Activated B cell treated with CpG ODN at 0.5 μM for 24 hours (primary cell): ENCODE measurements at regions of chr18 and their contacts with region 1.

Region 1: GRCh38 chr18:55589625-55590291 is 1.8 kb upstream of the TCF4 start:
- DNase-seq: peak; percentile 84
- ATAC-seq: peak; percentile 86
- H3K4me3 Mint-ChIP-seq: peak overlapping the region; percentile 89
- H3K27ac Mint-ChIP-seq: peak overlapping the region; percentile 89
- H3K4me1 Mint-ChIP-seq: peaks cover 38% of the 10 kb centered on the region
- H3K27me3 Mint-ChIP-seq: peaks cover 4% of the 10 kb centered on the region
- CTCF ChIP-seq: no peak

Region 2: GRCh38 chr18:55343396-55344073 is 246.2 kb before region 1 on chr18:
- CTCF ChIA-PET with region 1: no interaction called
- POLR2A ChIA-PET with region 1: interaction called, 13 read pairs
- intact Hi-C with region 1: loop called (anchors 5 kb)
- DNase-seq: no peak
- ATAC-seq: peak; percentile 82
- H3K4me3 Mint-ChIP-seq: no peak overlapping the region
- H3K27ac Mint-ChIP-seq: no peak overlapping the region
- H3K4me1 Mint-ChIP-seq: peaks cover 18% of the 10 kb centered on the region
- H3K27me3 Mint-ChIP-seq: no peaks in the 10 kb centered on the region
- CTCF ChIP-seq: peak; percentile 34

Region 3: DNA sequence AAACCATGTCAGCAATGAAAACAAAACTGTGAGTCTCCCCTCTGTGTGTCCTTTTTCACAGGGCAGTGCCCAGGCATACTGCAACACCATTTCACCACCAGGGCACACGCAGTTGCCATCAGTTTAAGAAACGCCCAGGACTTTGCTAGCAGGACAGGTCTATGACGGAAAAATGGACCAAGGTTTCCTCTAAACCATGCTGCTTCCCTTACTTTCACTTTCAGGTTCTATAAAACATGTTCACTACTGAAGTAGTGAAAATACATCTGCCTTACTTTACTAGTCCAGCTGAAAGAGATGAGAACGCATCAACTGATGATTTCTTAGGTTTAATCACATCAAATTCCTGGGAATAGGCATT is 112.3 kb before region 1 on chr18:
- CTCF ChIA-PET with region 1: no interaction called
- POLR2A ChIA-PET with region 1: interaction called, 4 read pairs
- intact Hi-C with region 1: loop called (anchors 5 kb)
- DNase-seq: peak; percentile 23
- ATAC-seq: peak; percentile 94
- H3K4me3 Mint-ChIP-seq: peak overlapping the region; percentile 97
- H3K27ac Mint-ChIP-seq: peak overlapping the region; percentile 93
- H3K4me1 Mint-ChIP-seq: peaks cover 21% of the 10 kb centered on the region
- H3K27me3 Mint-ChIP-seq: no peaks in the 10 kb centered on the region
- CTCF ChIP-seq: no peak

Region 4: GRCh38 chr18:55555395-55556027 is 34.2 kb before region 1 on chr18:
- CTCF ChIA-PET with region 1: no interaction called
- POLR2A ChIA-PET with region 1: interaction called, 8 read pairs
- intact Hi-C with region 1: loop called (anchors 2 kb)
- DNase-seq: no peak
- ATAC-seq: no peak
- H3K4me3 Mint-ChIP-seq: no peak overlapping the region
- H3K27ac Mint-ChIP-seq: no peak overlapping the region
- H3K4me1 Mint-ChIP-seq: peaks cover 18% of the 10 kb centered on the region
- H3K27me3 Mint-ChIP-seq: no peaks in the 10 kb centered on the region
- CTCF ChIP-seq: no peak

Region 5: DNA sequence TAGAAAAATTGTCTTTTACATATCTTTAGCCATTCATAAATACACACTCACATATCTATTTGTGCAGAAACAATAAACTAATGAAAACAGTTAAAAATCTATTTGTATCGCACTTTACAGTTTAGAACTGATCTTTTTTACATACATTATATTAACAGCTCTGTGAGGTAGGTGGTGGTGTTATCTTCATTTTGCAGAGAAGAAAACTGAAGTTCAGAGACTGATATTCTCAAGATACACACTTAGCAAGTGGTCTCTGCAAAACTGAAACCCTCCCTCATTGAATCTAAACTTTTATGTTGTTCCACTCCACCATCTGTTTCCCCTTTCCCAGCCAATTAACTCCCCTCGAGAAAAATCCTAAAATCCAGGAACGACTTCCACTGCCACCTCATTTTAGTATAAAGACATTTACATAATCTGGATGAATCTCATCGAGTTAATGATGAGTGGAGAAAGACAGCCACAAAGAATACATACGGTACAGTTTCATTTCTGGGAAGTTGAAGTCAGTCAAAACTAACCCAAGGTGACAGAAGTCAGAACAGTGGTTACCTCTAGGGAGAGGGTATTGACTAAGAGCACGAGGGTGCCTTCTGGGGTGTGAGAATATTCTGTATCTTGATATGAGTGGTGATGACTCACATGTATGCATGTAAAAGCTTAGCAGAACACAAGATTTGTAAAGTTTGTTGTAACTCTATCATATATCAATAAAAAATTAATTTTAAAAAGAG is 522.4 kb after region 1 on chr18:
- CTCF ChIA-PET with region 1: no interaction called
- POLR2A ChIA-PET with region 1: interaction called, 3 read pairs
- intact Hi-C with region 1: loop called (anchors 5 kb)
- DNase-seq: no peak
- ATAC-seq: peak; percentile 92
- H3K4me3 Mint-ChIP-seq: peak overlapping the region; percentile 64
- H3K27ac Mint-ChIP-seq: peak overlapping the region; percentile 72
- H3K4me1 Mint-ChIP-seq: peaks cover 50% of the 10 kb centered on the region
- H3K27me3 Mint-ChIP-seq: no peaks in the 10 kb centered on the region
- CTCF ChIP-seq: no peak

Region 6: DNA sequence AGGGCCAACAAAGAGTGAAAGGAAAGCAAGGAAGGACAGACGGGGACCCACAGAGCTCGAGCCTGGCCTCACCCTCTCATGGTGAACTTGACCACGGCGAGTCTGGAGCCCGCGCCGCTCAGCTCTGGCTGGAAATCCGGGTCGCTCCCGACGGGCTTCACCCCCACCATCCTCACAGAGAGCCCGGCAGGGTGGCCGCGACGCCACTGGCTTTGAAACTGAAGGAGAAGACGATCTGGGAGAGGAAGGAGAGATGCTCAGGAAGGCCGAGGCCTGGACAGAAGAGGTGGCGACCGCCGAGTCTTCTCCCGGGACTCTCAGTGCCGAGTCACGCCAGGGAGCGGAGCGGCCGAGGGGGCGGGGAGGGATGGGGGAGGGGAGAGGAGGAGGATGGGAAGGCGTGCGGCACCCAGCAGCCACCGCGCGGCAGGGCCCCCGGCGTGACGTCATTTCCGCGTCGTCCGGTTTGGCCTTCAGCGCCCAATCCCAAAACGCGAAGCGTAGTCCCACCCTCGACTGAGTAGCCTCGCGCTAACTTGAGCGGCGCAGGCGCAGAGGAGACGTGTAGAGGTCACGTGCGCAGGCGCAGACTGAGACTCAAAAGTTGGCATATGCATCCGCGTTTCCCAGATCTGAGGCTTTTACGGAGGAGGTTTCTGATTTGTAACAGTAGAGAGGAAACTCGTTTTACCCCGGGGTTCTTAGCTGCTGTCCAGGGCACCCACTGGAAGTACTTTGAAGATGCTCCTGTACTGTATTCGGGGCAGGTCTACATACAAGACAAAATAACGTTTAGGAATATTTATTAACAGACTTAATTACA is 1048.7 kb after region 1 on chr18 and contains the start of gene TXNL1:
- CTCF ChIA-PET with region 1: no interaction called
- POLR2A ChIA-PET with region 1: no interaction called
- intact Hi-C with region 1: loop called (anchors 5 kb)
- DNase-seq: peak; percentile 95
- ATAC-seq: peak; percentile 96
- H3K4me3 Mint-ChIP-seq: peak within 1 kb of the TSS; percentile 96
- H3K27ac Mint-ChIP-seq: peak within 1 kb of the TSS; percentile 99
- H3K4me1 Mint-ChIP-seq: peaks cover 52% of the 10 kb centered on the region
- H3K27me3 Mint-ChIP-seq: no peaks in the 10 kb centered on the region
- CTCF ChIP-seq: no peak
- total RNA-seq, gene TXNL1: 53.4 and 55.4 TPM in 2 replicates